IMR-90 (cell line): ENCODE measurements at regions of chr3 and their contacts with region 1.

Region 1: GRCh38 chr3:194900854-194901522 is 215.3 kb downstream of the FAM43A start:
- DNase-seq: no peak
- ATAC-seq: no peak
- H3K4me3 ChIP-seq: no peak overlapping the region
- H3K27ac ChIP-seq: no peak overlapping the region
- H3K4me1 ChIP-seq: peaks cover under 1% of the 10 kb centered on the region; the same call in 1 of the 2 replicates
- H3K27me3 ChIP-seq: peaks cover 9% of the 10 kb centered on the region
- CTCF ChIP-seq: no peak
- POLR2A ChIP-seq: no peak
- RAD21 ChIP-seq: no peak

Region 2: DNA sequence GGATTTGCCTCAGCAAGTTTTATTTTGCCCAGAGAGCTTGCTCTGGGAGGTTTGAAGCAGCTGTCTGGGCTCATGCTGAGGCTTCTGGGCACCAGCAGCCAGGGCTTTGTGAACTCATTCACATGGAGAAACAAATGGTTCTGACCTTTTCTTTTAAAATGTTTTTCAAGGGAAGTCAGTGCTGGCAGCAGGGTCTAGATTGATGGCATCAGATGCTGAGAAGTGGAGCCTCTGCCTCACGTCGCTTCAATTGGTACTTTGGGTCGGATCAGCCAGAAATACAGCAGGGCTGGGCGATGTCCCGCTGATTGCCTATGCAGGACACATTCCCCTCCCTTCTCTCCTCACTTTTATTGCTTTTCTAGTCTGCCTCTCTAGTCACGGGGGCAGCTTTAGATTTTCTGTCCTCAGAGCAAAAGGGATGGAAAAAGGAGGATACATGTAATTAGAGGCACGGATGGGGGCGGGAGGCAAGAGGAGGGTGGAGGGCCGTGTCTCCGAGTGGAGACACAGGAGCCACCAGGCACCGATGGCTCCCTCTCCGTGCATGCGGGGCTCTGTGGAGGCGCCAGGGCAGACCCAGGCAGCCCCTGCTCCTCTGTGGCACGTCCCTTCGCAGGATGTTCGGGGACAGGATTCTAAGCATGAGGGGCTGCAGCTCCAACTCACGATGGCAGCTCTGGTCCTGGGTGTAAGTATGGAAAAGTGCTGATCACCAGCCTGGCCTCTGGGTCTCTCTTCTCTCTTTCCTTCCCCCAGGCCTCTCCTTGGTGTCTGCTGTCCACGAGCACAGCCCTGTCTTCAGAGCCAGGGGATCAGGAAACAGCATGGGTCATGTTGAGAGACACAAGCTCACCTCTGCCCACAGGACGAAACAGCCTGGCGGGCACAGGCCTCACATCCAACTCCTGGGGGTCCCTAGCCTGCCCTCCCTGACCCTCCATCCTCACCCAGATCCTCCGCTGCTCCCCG is 99.2 kb before region 1 on chr3:
- CTCF ChIA-PET with region 1: no interaction called
- POLR2A ChIA-PET with region 1: no interaction called
- dilution Hi-C with region 1: no loop called
- in situ Hi-C with region 1: no loop called
- intact Hi-C with region 1: loop called (anchors 5 kb)
- DNase-seq: no peak
- ATAC-seq: no peak
- H3K4me3 ChIP-seq: no peak overlapping the region
- H3K27ac ChIP-seq: no peak overlapping the region
- H3K4me1 ChIP-seq: no peaks in the 10 kb centered on the region
- H3K27me3 ChIP-seq: peaks cover 73% of the 10 kb centered on the region
- CTCF ChIP-seq: no peak
- POLR2A ChIP-seq: no peak
- RAD21 ChIP-seq: no peak

Region 3: DNA sequence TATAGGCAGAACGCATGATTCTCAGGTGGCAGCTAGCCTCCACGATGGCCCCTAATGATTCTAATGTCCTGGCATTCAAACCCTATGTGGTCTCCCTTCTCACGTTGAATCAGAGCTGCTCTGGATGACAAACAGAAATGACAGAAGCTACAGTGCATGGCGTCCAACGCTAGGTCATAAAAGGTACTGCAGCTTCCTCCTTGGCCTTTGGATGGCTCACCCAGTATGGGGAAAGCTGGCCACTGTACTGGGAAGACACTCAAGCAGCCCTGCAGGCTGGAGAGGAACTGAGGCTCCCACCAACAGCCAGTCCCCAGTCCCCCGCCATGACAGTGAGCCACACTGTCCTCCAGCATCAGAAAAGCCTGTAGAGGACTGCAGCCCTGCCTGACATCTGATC is 71.0 kb after region 1 on chr3:
- CTCF ChIA-PET with region 1: no interaction called
- POLR2A ChIA-PET with region 1: no interaction called
- dilution Hi-C with region 1: no loop called
- in situ Hi-C with region 1: no loop called
- intact Hi-C with region 1: loop called (anchors 2 kb)
- DNase-seq: no peak
- ATAC-seq: no peak
- H3K4me3 ChIP-seq: no peak overlapping the region
- H3K27ac ChIP-seq: no peak overlapping the region
- H3K4me1 ChIP-seq: no peaks in the 10 kb centered on the region
- H3K27me3 ChIP-seq: peaks cover 42% of the 10 kb centered on the region
- CTCF ChIP-seq: no peak
- POLR2A ChIP-seq: no peak
- RAD21 ChIP-seq: no peak